GM13977 (cell line): ENCODE measurements at regions of chr6 and their contacts with region 1.

Region 1: GRCh38 chr6:155530219-155530834 is 74.7 kb upstream of the NOX3 start:
- DNase-seq: peak; percentile 35
- CTCF ChIP-seq: peak; percentile 77

Region 2: DNA sequence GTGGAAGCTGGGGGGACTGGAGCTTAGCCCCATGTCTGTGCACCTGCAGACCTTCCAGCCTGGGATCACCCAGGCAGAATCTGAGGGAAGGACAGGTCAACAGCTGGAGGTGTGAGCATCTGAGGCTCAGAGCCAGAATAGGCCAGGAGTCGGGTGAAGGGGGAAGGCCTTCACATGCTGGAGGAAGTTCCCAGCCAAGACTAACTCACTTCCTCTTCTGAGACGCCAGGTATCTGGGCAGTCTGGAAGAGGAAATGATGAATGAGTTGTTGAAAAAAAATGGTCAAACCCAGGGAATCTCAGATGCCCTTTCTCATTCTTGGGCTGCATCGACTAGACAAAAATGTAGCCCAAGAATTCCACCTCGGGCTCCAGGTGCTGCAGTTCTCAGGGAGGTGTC is 608.8 kb before region 1 on chr6:
- in situ Hi-C with region 1: loop called (anchors 25 kb)
- DNase-seq: no peak
- CTCF ChIP-seq: no peak

Region 3: GRCh38 chr6:155628306-155628705 is 98.0 kb after region 1 on chr6:
- in situ Hi-C with region 1: no loop called
- DNase-seq: no peak
- CTCF ChIP-seq: no peak